Uterus (tissue), 4 donors: ENCODE measurements at regions of chr10 and their contacts with region 1.

Region 1: DNA sequence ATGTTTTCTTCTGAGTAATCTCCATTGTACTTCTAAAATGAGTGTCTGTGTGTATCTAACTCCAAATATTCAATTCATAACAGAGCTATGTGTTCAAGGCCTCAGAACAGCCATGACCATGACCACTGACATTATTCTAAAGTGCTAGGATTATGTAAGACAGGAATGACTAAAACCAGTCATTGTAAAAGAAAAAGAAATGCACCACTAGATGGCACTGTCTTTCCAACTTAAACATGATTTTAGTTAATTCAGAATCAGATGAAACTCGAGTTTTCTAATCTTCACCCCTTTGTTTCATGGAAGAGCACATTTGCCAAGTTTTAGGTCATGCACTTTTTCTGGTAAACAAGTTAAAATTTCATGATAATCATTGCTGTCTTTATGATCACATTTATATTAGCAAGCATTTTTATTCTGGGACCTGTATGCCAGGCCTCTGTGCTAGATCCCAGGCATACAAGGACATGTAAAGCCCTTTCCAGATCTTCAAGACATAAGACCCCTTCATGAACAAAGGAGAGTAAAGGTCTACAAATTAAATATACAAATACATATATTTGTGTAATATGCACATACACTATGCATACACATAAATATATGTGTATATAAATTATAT is 26.1 kb upstream of the RSU1 start:
- DNase-seq: no peak
- H3K4me3 ChIP-seq: no peak overlapping the region
- H3K27ac ChIP-seq: no peak overlapping the region
- H3K4me1 ChIP-seq: no peaks in the 10 kb centered on the region
- H3K27me3 ChIP-seq: no peaks in the 10 kb centered on the region
- CTCF ChIP-seq: peak; percentile 43 to 70 (median 60)
- POLR2A ChIP-seq: no peak

Region 2: GRCh38 chr10:16681521-16681920 is 161.8 kb before region 1 on chr10:
- intact Hi-C with region 1: no loop called
- DNase-seq: no peak
- H3K4me3 ChIP-seq: no peak overlapping the region
- H3K27ac ChIP-seq: no peak overlapping the region
- H3K4me1 ChIP-seq: no peaks in the 10 kb centered on the region
- H3K27me3 ChIP-seq: no peaks in the 10 kb centered on the region
- CTCF ChIP-seq: no peak
- POLR2A ChIP-seq: no peak

Region 3: GRCh38 chr10:16965740-16966447 is 122.5 kb after region 1 on chr10:
- intact Hi-C with region 1: no loop called
- DNase-seq: no peak
- H3K4me3 ChIP-seq: no peak overlapping the region
- H3K27ac ChIP-seq: no peak overlapping the region
- H3K4me1 ChIP-seq: no peaks in the 10 kb centered on the region
- H3K27me3 ChIP-seq: no peaks in the 10 kb centered on the region
- CTCF ChIP-seq: no peak
- POLR2A ChIP-seq: no peak

Region 4: GRCh38 chr10:17257466-17258321 is 414.3 kb after region 1 on chr10:
- intact Hi-C with region 1: loop called (anchors 5 kb)
- DNase-seq: peak; percentile 41 to 65
- H3K4me3 ChIP-seq: no peak overlapping the region
- H3K27ac ChIP-seq: peak overlapping the region in 1 of 2 donors; percentile 48
- H3K4me1 ChIP-seq: no peaks in the 10 kb centered on the region
- H3K27me3 ChIP-seq: no peaks in the 10 kb centered on the region
- CTCF ChIP-seq: peak; percentile 81 to 85 (median 82)
- POLR2A ChIP-seq: no peak